Activated T-helper 1 cell treated with anti-CD3 and anti-CD28 coated beads, Interleukin-12 subunit alpha, Interleukin-12 subunit beta, Interleukin-2, Interleukin-4 antibody, amounts not matched to agents 30 ng/mL and 10 ng/mL and 1 ng/mL, durations not matched to agents 14 hours and 24 hours and 36 hours (primary cell): ENCODE measurements at regions of chr1 and their contacts with region 1.

Region 1: DNA sequence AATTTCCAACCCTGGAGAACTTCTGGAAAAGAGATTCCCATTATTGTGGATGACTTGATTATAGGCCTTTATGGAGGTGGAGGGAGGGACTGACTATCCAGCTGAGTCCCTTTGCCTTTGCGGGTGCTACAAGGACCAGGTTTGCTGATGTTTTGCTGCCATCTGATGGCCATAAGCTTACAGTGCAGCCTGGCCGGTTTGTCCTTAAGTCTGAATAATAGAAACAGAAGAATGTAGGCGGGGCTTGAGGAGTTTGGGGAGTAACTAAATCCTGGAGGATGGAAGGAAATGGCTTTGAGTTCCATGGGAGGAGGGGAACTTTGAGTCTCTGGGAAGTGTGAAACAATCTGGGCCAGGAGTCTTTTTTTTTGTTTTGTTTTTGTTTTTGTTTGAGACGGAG is 55.7 kb upstream of the CD1D start:
- DNase-seq: peak; percentile 57
- H3K4me3 Mint-ChIP-seq: no peak overlapping the region
- H3K27ac Mint-ChIP-seq: no peak overlapping the region
- H3K4me1 Mint-ChIP-seq: no peaks in the 10 kb centered on the region
- H3K27me3 Mint-ChIP-seq: peaks cover 24% of the 10 kb centered on the region

Region 2: DNA sequence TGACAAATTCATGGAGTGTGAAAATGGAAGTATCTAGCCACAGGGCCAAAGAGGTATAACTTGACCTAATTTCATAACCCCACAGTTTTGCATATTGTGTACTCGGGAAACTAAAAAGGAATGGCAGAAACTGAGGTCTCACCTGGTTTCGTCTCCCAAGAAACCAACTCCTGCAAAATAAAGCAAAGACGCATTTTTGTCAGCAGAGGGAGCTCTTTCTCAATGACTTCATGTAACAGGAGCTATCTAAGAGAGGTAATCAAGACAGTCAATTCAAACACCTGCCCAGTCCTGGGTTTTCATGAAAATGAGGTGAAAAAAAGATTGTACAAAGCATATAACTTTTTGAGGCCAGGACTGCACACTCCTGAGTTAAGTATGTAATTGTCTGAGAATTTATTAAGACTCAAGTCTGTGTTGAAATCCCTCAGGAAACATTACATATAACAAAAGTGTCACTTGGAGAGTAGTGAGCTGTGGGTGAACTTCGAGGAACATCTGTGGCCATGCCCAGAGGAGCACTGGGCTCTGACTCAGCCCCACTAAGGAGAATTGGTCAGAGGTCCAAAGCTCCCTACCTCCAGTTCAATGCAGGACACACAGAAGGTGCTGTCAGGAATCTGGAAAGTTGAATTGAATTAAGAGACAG is 544.7 kb before region 1 on chr1:
- intact Hi-C with region 1: loop called (anchors 1 kb)
- DNase-seq: peak; percentile 2
- H3K4me3 Mint-ChIP-seq: no peak overlapping the region
- H3K27ac Mint-ChIP-seq: no peak overlapping the region
- H3K4me1 Mint-ChIP-seq: no peaks in the 10 kb centered on the region
- H3K27me3 Mint-ChIP-seq: peaks cover 16% of the 10 kb centered on the region

Region 3: GRCh38 chr1:157910270-157910669 is 214.7 kb before region 1 on chr1:
- intact Hi-C with region 1: no loop called
- DNase-seq: no peak
- H3K4me3 Mint-ChIP-seq: no peak overlapping the region
- H3K27ac Mint-ChIP-seq: no peak overlapping the region
- H3K4me1 Mint-ChIP-seq: no peaks in the 10 kb centered on the region
- H3K27me3 Mint-ChIP-seq: no peaks in the 10 kb centered on the region

Region 4: DNA sequence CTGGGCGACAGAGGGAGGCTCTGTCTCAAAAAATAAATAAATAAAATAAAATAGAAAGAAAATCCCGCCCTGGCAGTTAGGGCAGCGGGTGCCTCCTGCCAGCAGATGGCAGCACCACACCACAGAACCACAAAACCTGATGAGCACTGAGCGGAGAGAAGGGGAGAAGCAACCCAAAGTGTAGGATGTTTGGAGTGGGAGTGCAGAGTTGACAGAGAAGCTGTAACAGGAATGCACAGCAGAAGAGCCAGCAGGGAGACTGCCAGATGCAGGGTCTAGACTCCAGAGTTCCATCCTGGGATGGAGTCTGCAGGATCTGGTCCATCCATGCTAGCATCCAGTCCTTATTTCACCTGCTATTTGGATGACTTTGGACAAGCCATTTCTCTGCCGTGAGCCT is 161.3 kb before region 1 on chr1:
- intact Hi-C with region 1: loop called (anchors 1 kb)
- DNase-seq: peak; percentile 6
- H3K4me3 Mint-ChIP-seq: no peak overlapping the region
- H3K27ac Mint-ChIP-seq: no peak overlapping the region
- H3K4me1 Mint-ChIP-seq: no peaks in the 10 kb centered on the region
- H3K27me3 Mint-ChIP-seq: peaks cover 3% of the 10 kb centered on the region

Region 5: GRCh38 chr1:157992031-157992832 is 132.8 kb before region 1 on chr1:
- intact Hi-C with region 1: loop called (anchors 1 kb)
- DNase-seq: no peak
- H3K4me3 Mint-ChIP-seq: no peak overlapping the region
- H3K27ac Mint-ChIP-seq: no peak overlapping the region
- H3K4me1 Mint-ChIP-seq: no peaks in the 10 kb centered on the region
- H3K27me3 Mint-ChIP-seq: peaks cover 41% of the 10 kb centered on the region

Region 6: DNA sequence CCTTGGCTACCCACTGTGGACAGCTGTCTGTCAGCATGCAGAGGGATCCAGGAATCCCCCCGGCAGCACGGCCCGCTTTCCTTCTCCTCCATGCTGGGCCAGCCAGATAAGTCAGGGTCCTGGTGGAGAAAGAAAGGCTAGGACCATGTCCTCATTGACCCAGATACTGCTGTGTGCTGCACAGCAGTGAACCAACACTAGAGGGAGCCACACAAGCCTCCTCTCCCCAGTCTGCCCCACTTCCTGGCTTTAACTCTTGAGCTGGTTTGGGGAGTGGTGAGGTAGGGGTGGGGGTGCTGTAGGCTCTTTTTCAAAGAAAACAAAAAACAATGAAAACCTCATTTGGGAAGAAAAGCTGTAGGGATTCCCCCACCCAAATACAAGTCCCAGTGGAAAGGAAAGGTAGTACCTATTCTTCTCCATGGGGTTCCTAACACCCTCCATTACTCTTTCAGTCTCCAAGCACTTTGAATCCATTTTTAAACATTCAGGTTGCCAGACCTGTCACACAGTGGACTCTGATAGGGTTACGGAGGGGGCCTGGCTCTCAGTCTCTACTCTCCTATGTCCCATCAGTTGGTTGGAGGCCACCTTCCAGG is 29.2 kb before region 1 on chr1:
- intact Hi-C with region 1: loop called (anchors 1 kb)
- DNase-seq: peak; percentile 7
- H3K4me3 Mint-ChIP-seq: no peak overlapping the region
- H3K27ac Mint-ChIP-seq: no peak overlapping the region
- H3K4me1 Mint-ChIP-seq: no peaks in the 10 kb centered on the region
- H3K27me3 Mint-ChIP-seq: no peaks in the 10 kb centered on the region

Region 7: GRCh38 chr1:158107916-158108315 is 17.1 kb before region 1 on chr1:
- intact Hi-C with region 1: no loop called
- DNase-seq: no peak
- H3K4me3 Mint-ChIP-seq: no peak overlapping the region
- H3K27ac Mint-ChIP-seq: no peak overlapping the region
- H3K4me1 Mint-ChIP-seq: peaks cover 2% of the 10 kb centered on the region
- H3K27me3 Mint-ChIP-seq: peaks cover 32% of the 10 kb centered on the region

Region 8: DNA sequence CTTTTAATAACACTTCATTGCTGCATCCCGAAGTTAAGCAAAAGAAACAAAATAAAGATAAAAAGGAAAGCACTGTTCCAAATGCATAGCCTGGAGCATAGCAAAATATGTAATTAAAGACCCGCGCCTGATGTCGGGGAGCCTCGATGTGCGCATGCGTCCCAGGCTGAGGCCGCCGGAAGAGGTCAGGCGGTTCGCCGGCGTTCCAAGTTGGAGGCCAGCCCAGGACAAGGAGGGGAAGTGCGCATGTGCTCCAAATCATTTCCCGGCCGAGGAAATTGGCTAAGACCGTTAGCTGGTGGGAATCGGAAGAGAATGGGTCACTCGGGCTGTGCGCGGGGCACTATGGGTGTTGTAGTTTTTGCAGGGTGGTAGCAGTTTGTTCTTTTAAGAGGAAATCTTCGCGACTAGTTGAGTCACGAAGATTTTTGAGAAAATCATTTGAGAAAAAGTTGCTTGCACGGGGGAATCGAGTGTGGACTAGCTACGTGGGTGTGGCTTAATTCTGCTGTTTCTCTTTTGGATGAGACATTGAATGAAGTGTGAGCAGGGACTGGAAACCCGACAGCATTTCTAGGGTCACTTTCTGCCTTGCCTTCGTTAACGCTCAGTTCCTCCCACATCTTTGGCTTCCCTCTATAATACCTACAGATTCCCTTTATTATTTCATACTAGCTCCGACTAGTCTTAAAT is 24.7 kb after region 1 on chr1:
- intact Hi-C with region 1: loop called (anchors 1 kb)
- DNase-seq: peak; percentile 57
- H3K4me3 Mint-ChIP-seq: peak overlapping the region; percentile 89
- H3K27ac Mint-ChIP-seq: peak overlapping the region; percentile 83
- H3K4me1 Mint-ChIP-seq: peaks cover 20% of the 10 kb centered on the region
- H3K27me3 Mint-ChIP-seq: no peaks in the 10 kb centered on the region

Region 9: GRCh38 chr1:158485455-158485854 is 360.5 kb after region 1 on chr1:
- intact Hi-C with region 1: no loop called
- DNase-seq: no peak
- H3K4me3 Mint-ChIP-seq: no peak overlapping the region
- H3K27ac Mint-ChIP-seq: no peak overlapping the region
- H3K4me1 Mint-ChIP-seq: no peaks in the 10 kb centered on the region
- H3K27me3 Mint-ChIP-seq: peaks cover 9% of the 10 kb centered on the region